CD4-positive, alpha-beta memory T cell (primary cell): ENCODE measurements at regions of chr5 and their contacts with region 1.

Region 1: DNA sequence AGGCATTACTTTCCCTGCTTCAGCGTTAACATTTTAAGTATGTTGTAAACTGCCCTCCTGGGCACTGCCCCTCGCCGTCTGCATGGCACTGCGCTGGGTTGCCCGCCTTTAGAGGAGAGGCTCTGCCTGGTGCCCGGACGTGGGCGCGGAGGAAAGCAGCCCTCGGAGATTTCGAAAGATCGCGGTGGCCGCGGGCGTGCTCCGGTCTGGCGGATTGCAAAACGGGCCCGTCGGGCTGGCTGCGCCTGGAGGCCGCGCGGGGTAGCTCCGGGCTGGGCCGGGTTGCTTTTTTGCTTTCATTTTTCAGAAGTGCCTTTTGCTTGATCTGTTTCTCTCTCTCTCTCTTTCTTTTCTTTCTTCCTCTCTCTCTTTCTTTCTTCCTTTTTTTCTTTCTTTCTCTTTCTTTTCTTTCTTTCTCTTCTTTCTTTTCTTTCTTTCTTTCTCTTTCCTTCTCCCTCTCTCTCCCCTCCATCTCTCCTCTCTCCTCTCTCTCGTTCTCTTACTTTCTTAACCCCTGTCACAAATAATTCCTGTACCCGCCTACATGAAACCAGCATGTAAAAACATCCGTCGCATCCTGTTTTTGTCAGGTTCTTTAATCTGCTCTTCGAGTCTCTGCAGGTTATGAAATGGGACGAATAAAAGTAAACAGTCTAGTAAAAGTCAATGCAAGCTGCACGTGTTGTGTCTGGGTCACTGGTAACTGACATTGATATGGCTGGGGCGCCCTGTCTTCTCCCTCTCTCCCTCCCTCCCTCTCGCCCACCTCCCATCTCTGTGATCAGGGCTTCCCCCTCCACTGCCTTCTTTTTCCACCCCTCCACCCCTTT is 1.7 kb downstream of the FST start:
- DNase-seq: peak; percentile 53 to 66 (median 59)
- H3K4me3 ChIP-seq: peak overlapping the region; percentile 37 to 57
- H3K4me3 Mint-ChIP-seq: peak overlapping the region; percentile 82 to 97 (median 91)
- H3K27ac ChIP-seq: no peak overlapping the region
- H3K27ac Mint-ChIP-seq: peak overlapping the region; percentile 43 to 84 (median 59)
- H3K4me1 ChIP-seq: peaks cover 34% of the 10 kb centered on the region
- H3K4me1 Mint-ChIP-seq: peaks cover 17 to 50% (median 31%) of the 10 kb centered on the region in 4 donors
- H3K27me3 ChIP-seq: peaks cover 25% of the 10 kb centered on the region
- H3K27me3 Mint-ChIP-seq: peaks cover 29 to 41% of the 10 kb centered on the region in 2 donors

Region 2: DNA sequence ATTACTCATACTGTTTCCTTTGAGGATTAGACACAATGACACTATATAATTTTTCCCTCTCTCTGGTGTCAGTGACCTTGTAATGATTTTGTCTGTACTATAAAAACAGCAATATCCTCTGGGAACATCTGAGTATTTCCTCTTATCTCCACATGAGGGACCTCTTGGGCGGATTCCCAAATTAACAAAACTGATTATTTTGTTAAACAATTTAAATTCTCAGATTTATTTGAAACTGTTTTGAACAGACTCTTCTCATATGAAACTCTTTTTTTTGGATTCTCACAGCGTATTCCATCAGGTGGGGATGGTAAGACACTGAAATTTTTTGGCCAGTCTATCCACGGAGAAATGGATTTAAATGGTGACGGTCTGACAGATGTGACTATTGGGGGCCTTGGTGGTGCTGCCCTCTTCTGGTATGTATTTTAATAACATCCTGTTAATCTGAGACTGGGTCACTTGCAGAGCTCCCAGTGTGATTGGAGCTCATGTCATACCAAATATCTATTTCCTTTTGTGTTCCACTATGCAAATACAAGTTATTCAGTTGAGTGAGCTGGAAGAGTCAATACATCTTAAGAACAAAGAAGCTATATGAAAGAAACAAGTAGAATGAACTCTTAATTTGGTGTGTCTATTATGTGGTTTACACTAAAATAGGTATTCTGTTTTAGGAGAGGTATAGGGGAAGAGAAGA is 566.8 kb before region 1 on chr5:
- CTCF ChIA-PET with region 1: no interaction called
- POLR2A ChIA-PET with region 1: no interaction called
- intact Hi-C with region 1: no loop called
- DNase-seq: peak; percentile 41 to 72 (median 67)
- H3K4me3 ChIP-seq: no peak overlapping the region
- H3K4me3 Mint-ChIP-seq: peak overlapping the region in 7 of 8 donors; percentile 58 to 77 (median 74)
- H3K27ac ChIP-seq: no peak overlapping the region
- H3K27ac Mint-ChIP-seq: peak overlapping the region in 1 of 7 donors; percentile 39
- H3K4me1 ChIP-seq: peaks cover 5% of the 10 kb centered on the region
- H3K4me1 Mint-ChIP-seq: peaks cover 0 to 9% (median 2%) of the 10 kb centered on the region in 4 donors
- H3K27me3 ChIP-seq: no peaks in the 10 kb centered on the region
- H3K27me3 Mint-ChIP-seq: no peaks in the 10 kb centered on the region

Region 3: DNA sequence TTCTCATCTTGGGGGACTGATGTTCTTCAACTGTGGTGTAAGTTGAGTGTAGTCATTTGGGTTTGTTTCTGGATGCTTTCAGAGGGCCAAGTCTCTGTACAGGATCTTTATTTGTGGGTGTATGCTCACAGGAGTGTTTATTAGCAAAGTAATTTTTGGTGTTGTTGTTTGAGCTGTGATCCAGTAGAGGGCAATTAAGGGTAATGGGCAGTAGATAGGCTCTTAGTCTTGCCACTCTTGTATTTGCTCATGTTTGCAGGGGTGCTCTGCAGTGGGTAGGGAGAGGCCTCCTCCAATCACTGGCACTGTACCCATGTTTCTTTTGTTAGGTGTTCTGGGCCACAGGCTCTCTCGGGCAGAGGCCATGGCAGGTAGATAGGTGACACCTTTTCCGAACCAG is 538.8 kb before region 1 on chr5:
- CTCF ChIA-PET with region 1: no interaction called
- POLR2A ChIA-PET with region 1: no interaction called
- intact Hi-C with region 1: loop called (anchors 5 kb)
- DNase-seq: no peak
- H3K4me3 ChIP-seq: no peak overlapping the region
- H3K4me3 Mint-ChIP-seq: no peak overlapping the region
- H3K27ac ChIP-seq: no peak overlapping the region
- H3K27ac Mint-ChIP-seq: no peak overlapping the region
- H3K4me1 ChIP-seq: peaks cover 3% of the 10 kb centered on the region
- H3K4me1 Mint-ChIP-seq: peaks cover 4 to 9% (median 7%) of the 10 kb centered on the region in 4 donors
- H3K27me3 ChIP-seq: no peaks in the 10 kb centered on the region
- H3K27me3 Mint-ChIP-seq: no peaks in the 10 kb centered on the region

Region 4: DNA sequence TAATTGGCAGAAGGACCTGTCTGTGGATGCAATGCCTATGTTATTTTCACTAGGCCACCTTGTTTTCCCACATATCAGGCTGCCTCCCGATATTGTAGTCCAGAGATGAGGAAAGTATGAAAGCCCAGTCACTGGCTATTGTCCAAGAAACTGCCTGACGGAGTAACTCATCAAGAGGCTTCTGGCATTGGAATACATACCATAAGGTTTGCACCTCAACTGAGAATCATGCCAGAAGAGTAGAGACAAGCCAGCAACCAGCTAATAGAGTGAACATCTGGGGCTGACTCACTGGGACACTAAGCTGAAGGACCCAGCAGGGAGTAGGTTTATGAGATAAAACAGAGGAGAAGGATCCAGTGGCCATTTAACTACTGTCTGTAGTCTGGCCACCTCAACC is 138.9 kb before region 1 on chr5:
- CTCF ChIA-PET with region 1: no interaction called
- POLR2A ChIA-PET with region 1: no interaction called
- intact Hi-C with region 1: no loop called
- DNase-seq: no peak
- H3K4me3 ChIP-seq: no peak overlapping the region
- H3K4me3 Mint-ChIP-seq: no peak overlapping the region
- H3K27ac ChIP-seq: no peak overlapping the region
- H3K27ac Mint-ChIP-seq: no peak overlapping the region
- H3K4me1 ChIP-seq: no peaks in the 10 kb centered on the region
- H3K4me1 Mint-ChIP-seq: no peaks in the 10 kb centered on the region
- H3K27me3 ChIP-seq: no peaks in the 10 kb centered on the region
- H3K27me3 Mint-ChIP-seq: peaks cover 0 to 3% of the 10 kb centered on the region in 2 donors

Region 5: GRCh38 chr5:53469946-53470687 is 12.0 kb before region 1 on chr5:
- CTCF ChIA-PET with region 1: no interaction called
- POLR2A ChIA-PET with region 1: no interaction called
- intact Hi-C with region 1: no loop called
- DNase-seq: no peak
- H3K4me3 ChIP-seq: no peak overlapping the region
- H3K4me3 Mint-ChIP-seq: no peak overlapping the region
- H3K27ac ChIP-seq: no peak overlapping the region
- H3K27ac Mint-ChIP-seq: no peak overlapping the region
- H3K4me1 ChIP-seq: no peaks in the 10 kb centered on the region
- H3K4me1 Mint-ChIP-seq: no peaks in the 10 kb centered on the region
- H3K27me3 ChIP-seq: peaks cover 5% of the 10 kb centered on the region
- H3K27me3 Mint-ChIP-seq: peaks cover 26 to 30% of the 10 kb centered on the region in 2 donors

Region 6: GRCh38 chr5:53560506-53561191 is 78.5 kb after region 1 on chr5 and contains the start of gene NDUFS4:
- CTCF ChIA-PET with region 1: interaction called, 3 read pairs
- POLR2A ChIA-PET with region 1: no interaction called
- intact Hi-C with region 1: loop called (anchors 5 kb)
- DNase-seq: peak; percentile 69 to 75 (median 71)
- H3K4me3 ChIP-seq: peak within 1 kb of the TSS; percentile 85 to 91
- H3K4me3 Mint-ChIP-seq: peak within 1 kb of the TSS; percentile 97 to 100 (median 99)
- H3K27ac ChIP-seq: peak within 1 kb of the TSS; percentile 68
- H3K27ac Mint-ChIP-seq: peak within 1 kb of the TSS; percentile 90 to 98 (median 96)
- H3K4me1 ChIP-seq: peaks cover 28% of the 10 kb centered on the region
- H3K4me1 Mint-ChIP-seq: peaks cover 22 to 54% (median 41%) of the 10 kb centered on the region in 4 donors
- H3K27me3 ChIP-seq: peaks cover 9% of the 10 kb centered on the region
- H3K27me3 Mint-ChIP-seq: peaks cover 11 to 14% of the 10 kb centered on the region in 2 donors
- total RNA-seq, gene NDUFS4: 23.6 to 32.5 TPM

Region 7: DNA sequence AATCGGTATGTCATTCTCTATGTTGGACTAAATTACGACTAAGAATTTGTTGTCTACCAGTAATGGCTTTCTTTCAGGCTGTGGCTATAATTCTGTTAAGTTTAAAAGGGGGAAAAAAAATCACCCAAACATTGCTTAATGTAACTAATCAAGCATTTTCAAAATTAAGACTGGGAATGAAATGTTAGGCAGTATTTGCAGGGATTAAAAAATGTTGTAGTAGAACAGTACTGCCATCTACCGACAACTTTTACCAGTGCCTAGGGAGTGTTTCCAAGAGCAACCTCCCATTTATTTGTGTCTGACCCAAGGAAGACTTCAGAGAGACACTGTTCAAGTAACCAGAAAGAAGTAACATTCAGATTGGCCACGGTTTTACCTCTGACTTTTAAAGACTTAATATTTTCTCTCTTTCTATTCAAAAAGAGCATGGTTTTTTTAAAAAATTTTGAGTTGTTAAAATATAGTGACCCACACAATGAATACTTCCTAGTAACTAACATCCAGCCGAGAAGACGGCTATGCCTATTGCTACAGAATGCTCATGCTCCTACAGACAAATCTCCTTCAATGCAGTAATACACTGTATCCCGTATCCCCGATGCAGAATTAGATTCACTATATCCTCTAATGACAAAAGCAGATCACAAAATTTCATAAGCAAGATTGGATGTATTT is 735.9 kb after region 1 on chr5:
- CTCF ChIA-PET with region 1: interaction called, 4 read pairs
- POLR2A ChIA-PET with region 1: no interaction called
- intact Hi-C with region 1: loop called (anchors 1 kb)
- DNase-seq: peak in 4 of 5 donors; percentile 10 to 32 (median 22)
- H3K4me3 ChIP-seq: no peak overlapping the region
- H3K4me3 Mint-ChIP-seq: no peak overlapping the region
- H3K27ac ChIP-seq: no peak overlapping the region
- H3K27ac Mint-ChIP-seq: no peak overlapping the region
- H3K4me1 ChIP-seq: no peaks in the 10 kb centered on the region
- H3K4me1 Mint-ChIP-seq: peaks cover 3 to 11% (median 7%) of the 10 kb centered on the region in 4 donors
- H3K27me3 ChIP-seq: no peaks in the 10 kb centered on the region
- H3K27me3 Mint-ChIP-seq: no peaks in the 10 kb centered on the region

Region 8: DNA sequence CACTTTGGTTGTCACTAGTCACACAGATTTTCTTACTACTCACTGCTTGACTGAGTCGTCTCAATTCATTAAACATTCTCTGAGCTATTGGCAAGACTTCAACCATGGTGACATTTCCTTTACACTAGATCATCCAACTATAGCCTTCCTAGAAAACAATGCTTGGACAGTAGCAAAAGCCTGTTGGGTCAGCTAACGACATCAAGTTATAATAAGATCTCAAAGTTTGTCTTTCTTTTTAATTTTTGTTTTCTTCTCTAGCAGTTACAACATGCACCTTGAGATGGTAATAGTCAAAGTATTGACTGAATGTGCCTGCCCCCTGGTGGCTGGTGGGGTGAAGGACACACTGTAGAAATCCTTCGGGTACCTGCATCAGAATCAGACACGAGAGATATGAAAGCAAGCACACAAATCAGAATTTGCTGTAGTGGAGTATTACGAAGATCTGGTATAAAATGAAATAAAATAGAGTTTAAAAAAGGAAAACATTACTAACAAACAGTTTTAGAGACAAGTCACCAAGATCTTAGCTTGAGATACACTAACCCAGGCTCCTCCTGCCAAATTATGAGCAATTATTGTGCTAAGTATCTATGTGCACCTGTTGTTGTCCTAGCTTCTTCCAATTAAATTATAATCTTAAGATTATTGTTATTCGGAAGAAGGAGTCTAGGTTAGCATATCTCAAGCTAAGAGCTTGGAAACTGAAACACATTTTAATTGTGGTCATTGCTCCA is 747.1 kb after region 1 on chr5:
- CTCF ChIA-PET with region 1: interaction called, 24 read pairs
- POLR2A ChIA-PET with region 1: no interaction called
- intact Hi-C with region 1: loop called (anchors 1 kb)
- DNase-seq: peak; percentile 43 to 59 (median 58)
- H3K4me3 ChIP-seq: no peak overlapping the region
- H3K4me3 Mint-ChIP-seq: peak overlapping the region in 2 of 8 donors; percentile 31 to 68
- H3K27ac ChIP-seq: no peak overlapping the region
- H3K27ac Mint-ChIP-seq: peak overlapping the region in 2 of 7 donors; percentile 2 to 11
- H3K4me1 ChIP-seq: no peaks in the 10 kb centered on the region
- H3K4me1 Mint-ChIP-seq: peaks cover 5 to 18% (median 15%) of the 10 kb centered on the region in 4 donors
- H3K27me3 ChIP-seq: no peaks in the 10 kb centered on the region
- H3K27me3 Mint-ChIP-seq: no peaks in the 10 kb centered on the region